ENCODE measurements at regions of chr6 and their contacts with region 1.

Region 1: DNA sequence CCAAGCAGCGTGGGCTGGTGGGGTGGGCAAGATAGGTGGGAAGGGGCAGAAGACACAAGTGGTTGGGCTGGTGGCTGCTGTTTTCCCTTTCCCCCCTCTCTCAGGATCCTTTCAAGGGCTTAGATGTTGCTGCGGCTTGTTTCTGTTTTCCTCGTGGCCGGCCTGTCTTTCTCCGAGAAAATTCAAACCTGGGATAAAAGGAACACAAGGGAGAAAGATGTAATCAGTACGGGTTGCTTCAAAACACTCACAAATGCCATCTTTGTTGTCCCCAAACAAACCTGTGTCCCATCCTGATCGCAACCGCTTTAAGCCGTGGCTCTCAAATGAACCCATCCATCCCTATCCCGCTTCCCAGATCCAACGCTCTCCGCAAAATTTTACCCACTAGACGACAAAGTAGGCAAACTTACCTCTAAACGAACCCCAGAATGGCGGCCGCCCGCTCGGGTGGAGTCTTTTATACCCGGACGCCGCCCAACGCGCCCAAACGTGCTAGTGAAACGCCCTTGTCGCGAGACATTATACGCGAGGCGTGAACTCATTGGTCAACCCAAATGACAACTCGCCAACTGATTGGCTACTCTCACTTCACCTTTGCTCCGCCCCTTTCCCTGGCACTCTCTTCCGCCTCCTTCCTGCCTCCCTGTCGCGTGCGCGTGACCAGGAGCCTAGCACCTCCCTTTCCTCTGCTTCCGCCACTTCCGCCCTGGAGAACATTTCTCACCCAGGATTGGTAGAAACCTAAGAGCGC is at the start of gene PPP1R10:
- DNase-seq: peak; percentile 99
- ATAC-seq: peak; percentile 82
- H3K4me3 Mint-ChIP-seq: peak within 1 kb of the TSS; percentile 95
- H3K27ac Mint-ChIP-seq: peak within 1 kb of the TSS; percentile 98
- H3K4me1 Mint-ChIP-seq: peaks cover 39% of the 10 kb centered on the region
- H3K27me3 Mint-ChIP-seq: no peaks in the 10 kb centered on the region
- CTCF ChIP-seq: no peak
- total RNA-seq, gene PPP1R10: 59.0 to 59.8 TPM

Region 2: DNA sequence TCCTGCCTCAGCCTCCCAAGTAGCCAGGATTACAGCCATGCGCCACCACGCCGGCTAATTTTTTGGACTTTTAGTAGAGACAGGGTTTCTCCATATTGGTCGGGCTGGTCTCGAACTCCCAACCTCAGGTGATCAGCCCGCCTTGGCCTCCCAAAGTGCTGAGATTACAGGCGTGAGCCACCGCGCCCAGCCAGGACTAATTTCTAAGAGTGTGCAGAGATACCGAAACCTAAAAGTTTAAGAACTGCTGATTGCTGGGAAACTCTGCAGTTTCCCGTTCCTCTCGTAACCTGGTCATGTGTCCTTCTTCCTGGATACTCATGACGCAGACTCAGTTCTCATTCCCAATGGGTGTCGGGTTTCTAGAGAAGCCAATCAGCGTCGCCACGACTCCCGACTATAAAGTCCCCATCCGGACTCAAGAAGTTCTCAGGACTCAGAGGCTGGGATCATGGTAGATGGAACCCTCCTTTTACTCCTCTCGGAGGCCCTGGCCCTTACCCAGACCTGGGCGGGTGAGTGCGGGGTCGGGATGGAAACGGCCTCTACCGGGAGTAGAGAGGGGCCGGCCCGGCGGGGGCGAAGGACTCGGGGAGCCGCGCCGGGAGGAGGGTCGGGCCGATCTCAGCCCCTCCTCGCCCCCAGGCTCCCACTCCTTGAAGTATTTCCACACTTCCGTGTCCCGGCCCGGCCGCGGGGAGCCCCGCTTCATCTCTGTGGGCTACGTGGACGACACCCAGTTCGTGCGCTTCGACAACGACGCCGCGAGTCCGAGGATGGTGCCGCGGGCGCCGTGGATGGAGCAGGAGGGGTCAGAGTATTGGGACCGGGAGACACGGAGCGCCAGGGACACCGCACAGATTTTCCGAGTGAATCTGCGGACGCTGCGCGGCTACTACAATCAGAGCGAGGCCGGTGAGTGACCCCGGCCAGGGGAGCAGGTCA is 127.6 kb before region 1 on chr6 and contains the start of gene HLA-E:
- CTCF ChIA-PET with region 1: interaction called, 10 read pairs
- POLR2A ChIA-PET with region 1: interaction called, 52 read pairs
- intact Hi-C with region 1: loop called (anchors 5 kb)
- DNase-seq: peak; percentile 94
- ATAC-seq: peak; percentile 75
- H3K4me3 Mint-ChIP-seq: peak within 1 kb of the TSS; percentile 97
- H3K27ac Mint-ChIP-seq: peak within 1 kb of the TSS; percentile 98
- H3K4me1 Mint-ChIP-seq: peaks cover 38% of the 10 kb centered on the region
- H3K27me3 Mint-ChIP-seq: no peaks in the 10 kb centered on the region
- CTCF ChIP-seq: no peak
- total RNA-seq, gene HLA-E: 493 to 499 TPM

Region 3: DNA sequence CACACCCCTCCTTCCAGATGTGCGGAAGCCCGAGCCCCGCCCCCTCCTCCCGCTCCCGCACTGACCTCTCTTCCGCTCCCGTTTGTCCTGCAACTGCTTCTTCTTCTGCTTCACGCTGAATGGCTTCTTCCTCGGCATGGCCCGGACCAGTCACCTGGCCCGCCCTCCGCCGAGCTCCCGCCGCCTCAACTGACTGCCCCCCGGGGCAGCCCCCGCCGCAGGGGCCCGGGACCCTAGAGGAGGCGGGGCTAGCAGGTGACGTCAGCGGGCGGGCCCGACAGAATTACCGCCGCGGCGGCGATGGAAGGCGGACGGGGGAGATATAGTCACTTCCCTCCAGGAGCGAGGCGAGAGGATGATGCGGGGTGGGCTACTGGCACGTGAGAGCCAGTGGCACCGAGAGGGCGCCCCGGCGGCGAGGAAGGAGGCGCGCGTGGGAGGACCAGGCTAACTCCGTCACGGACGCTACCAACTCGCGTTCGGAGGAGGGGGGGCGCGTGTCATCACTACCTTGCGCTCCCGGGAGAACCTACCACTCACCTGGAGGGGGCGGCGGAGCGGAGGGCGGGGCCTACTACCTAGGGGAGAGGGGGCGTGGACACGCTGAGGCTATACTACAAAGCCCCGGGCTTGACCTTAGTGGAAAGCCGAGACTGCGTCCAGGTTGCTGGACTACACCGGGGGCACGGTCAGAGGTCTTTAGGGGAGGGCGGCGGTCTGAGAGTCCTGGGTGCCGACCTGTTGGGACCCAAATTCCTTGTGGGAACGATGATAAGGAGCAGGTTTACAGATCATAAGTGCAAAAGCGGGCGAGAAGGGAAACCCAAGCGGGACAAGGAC is 60.7 kb before region 1 on chr6 and contains the start of gene GNL1:
- CTCF ChIA-PET with region 1: interaction called, 3 read pairs
- POLR2A ChIA-PET with region 1: interaction called, 47 read pairs
- intact Hi-C with region 1: no loop called
- DNase-seq: peak; percentile 100
- ATAC-seq: peak; percentile 93
- H3K4me3 Mint-ChIP-seq: peak within 1 kb of the TSS; percentile 91
- H3K27ac Mint-ChIP-seq: peak within 1 kb of the TSS; percentile 99
- H3K4me1 Mint-ChIP-seq: peaks cover 35% of the 10 kb centered on the region
- H3K27me3 Mint-ChIP-seq: no peaks in the 10 kb centered on the region
- CTCF ChIP-seq: no peak
- total RNA-seq, gene GNL1: 107 to 122 TPM

Region 4: GRCh38 chr6:30590994-30591393 is 26.0 kb before region 1 on chr6:
- CTCF ChIA-PET with region 1: interaction called, 48 read pairs
- POLR2A ChIA-PET with region 1: interaction called, 29 read pairs
- intact Hi-C with region 1: no loop called
- DNase-seq: no peak
- ATAC-seq: no peak
- H3K4me3 Mint-ChIP-seq: no peak overlapping the region
- H3K27ac Mint-ChIP-seq: peak overlapping the region; percentile 53
- H3K4me1 Mint-ChIP-seq: peaks cover 6% of the 10 kb centered on the region
- H3K27me3 Mint-ChIP-seq: no peaks in the 10 kb centered on the region
- CTCF ChIP-seq: no peak

Region 5: GRCh38 chr6:30678964-30679726 is 62.2 kb after region 1 on chr6:
- CTCF ChIA-PET with region 1: interaction called, 5 read pairs
- POLR2A ChIA-PET with region 1: interaction called, 39 read pairs
- intact Hi-C with region 1: loop called (anchors 5 kb)
- DNase-seq: peak; percentile 92
- ATAC-seq: peak; percentile 27
- H3K4me3 Mint-ChIP-seq: peak overlapping the region; percentile 88
- H3K27ac Mint-ChIP-seq: peak overlapping the region; percentile 95
- H3K4me1 Mint-ChIP-seq: peaks cover 11% of the 10 kb centered on the region
- H3K27me3 Mint-ChIP-seq: no peaks in the 10 kb centered on the region
- CTCF ChIP-seq: peak; percentile 97

Region 6: DNA sequence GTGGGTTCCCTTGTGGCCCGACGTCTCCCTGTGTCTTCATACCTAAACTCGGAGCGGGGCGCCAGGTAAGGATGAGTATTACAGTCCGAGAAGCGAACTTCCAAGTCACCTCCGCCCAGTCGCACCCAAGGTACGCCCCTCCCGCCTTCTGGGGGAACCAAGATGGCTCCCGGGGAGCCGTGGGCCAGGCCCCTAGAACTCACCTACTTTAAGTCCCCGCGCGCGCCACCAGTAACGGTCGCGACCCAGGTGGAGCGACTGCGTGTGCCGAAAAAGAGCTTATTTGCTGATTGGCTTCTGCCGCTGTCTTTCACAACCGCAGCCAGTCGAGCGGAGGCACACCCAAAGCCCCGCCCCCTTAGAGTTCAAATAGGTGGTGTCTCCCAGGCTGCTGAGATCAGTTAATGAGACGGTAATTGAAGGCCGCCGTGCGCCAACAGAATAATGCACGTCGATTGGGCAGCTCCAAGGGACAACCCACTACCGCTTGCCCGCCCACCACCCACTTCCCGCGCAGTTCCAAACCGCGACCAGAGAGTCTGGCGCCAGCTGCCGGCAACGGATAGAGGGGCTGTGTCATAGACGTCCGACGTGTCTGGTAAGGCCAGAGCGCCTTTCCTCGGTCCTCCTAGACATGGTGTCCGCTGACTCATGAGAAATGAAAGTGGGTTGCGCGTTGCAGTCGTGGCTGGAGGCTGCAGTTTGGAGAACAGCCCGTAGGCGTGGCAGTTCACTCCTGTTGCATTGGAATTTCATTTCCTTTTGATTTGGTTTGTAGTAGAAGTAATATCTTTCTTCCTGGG is 100.3 kb after region 1 on chr6 and contains the start of gene MDC1:
- CTCF ChIA-PET with region 1: interaction called, 10 read pairs
- POLR2A ChIA-PET with region 1: interaction called, 66 read pairs
- intact Hi-C with region 1: loop called (anchors 2 kb)
- DNase-seq: peak; percentile 100
- ATAC-seq: peak; percentile 78
- H3K4me3 Mint-ChIP-seq: peak within 1 kb of the TSS; percentile 80
- H3K27ac Mint-ChIP-seq: peak within 1 kb of the TSS; percentile 99
- H3K4me1 Mint-ChIP-seq: peaks cover 37% of the 10 kb centered on the region
- H3K27me3 Mint-ChIP-seq: no peaks in the 10 kb centered on the region
- CTCF ChIP-seq: no peak
- total RNA-seq, gene MDC1: 80.4 to 90.7 TPM

Measured in activated CD8-positive, alpha-beta T cell treated with anti-CD3 and anti-CD28 coated beads for 36 hours (primary cell).